ENCODE measurements at regions of chr9 and their contacts with region 1.

Region 1: DNA sequence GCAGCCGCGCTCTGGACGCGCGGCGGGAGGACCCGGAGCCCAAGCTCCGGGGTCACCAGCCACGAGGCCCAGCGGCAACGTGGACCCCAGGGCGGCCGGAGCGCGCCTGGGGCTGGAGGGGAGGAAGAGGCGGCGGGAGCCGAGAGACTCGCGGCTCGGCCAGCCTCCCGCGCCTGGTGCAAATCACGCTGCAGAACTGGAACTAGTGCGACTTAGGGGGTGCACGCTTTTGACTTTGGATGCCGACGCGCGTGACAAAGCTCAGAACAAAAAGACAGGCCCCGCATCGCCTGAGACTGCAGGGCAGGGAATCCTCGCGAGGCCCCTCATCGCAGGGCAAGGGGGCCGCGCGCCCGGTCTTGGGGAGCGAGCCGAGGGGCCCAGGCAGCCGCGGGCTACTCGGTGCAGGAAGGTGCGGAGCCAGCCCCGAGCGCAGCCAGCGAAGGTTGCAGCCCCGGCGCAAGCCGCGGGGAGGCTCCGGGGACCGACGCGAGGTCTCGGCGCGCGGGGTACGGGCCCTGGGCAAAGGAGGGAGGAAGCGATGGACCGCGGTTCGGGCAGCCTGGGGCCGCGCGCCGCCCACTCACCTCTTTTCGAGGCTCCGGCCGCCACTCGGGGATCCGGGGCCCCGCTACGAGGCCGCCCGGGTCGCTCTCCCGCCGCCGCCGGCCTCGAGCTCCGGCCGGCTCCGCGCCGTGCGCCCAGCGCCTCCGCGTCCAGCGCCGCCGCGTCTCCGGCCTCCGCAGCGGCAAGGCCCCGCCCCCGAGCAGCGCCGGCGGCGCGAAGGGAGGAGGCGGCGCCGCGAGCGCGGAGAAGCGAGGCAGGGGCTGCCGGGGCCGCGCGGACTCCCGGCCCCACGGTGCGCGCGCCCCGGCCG is at the start of gene GOLM1:
- H3K4me3 ChIP-seq: peak within 1 kb of the TSS; percentile 74
- H3K27ac ChIP-seq: peak within 1 kb of the TSS; percentile 91
- H3K4me1 ChIP-seq: peaks cover 8% of the 10 kb centered on the region
- CTCF ChIP-seq: peak; percentile 20; the same call in 1 of the 2 replicates

Region 2: DNA sequence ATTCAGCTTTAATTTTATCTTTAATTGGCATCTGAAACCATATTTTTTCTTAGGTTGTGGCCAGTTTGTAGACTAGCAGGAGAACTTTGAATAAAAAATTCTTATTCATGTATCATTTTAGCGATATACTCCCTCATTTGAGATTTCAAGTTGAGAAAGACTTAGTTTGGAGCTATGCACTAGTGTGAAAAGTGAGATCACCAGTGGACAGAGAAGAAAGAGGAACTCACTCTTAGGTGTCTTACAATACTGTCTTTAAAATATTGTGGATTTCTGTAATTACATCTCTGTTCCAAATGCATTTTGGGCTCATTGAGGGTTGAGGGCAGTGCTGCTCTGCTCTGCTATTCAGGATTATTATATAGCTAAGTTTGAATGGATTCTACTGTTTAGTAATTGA is 103.5 kb before region 1 on chr9:
- CTCF ChIA-PET with region 1: no interaction called
- POLR2A ChIA-PET with region 1: no interaction called
- H3K4me3 ChIP-seq: no peak overlapping the region
- H3K27ac ChIP-seq: no peak overlapping the region
- H3K4me1 ChIP-seq: no peaks in the 10 kb centered on the region
- CTCF ChIP-seq: no peak

Region 3: GRCh38 chr9:86126998-86127972 is 28.2 kb after region 1 on chr9:
- CTCF ChIA-PET with region 1: interaction called, 5 read pairs
- POLR2A ChIA-PET with region 1: interaction called, 33 read pairs
- H3K4me3 ChIP-seq: no peak overlapping the region
- H3K27ac ChIP-seq: peak overlapping the region; percentile 67
- H3K4me1 ChIP-seq: peaks cover 15% of the 10 kb centered on the region
- CTCF ChIP-seq: no peak

Region 4: GRCh38 chr9:86176468-86176867 is 77.4 kb after region 1 on chr9:
- CTCF ChIA-PET with region 1: no interaction called
- POLR2A ChIA-PET with region 1: interaction called, 10 read pairs
- H3K4me3 ChIP-seq: no peak overlapping the region
- H3K27ac ChIP-seq: peak overlapping the region; percentile 46; the same call in 1 of the 2 replicates
- H3K4me1 ChIP-seq: peaks cover 9% of the 10 kb centered on the region
- CTCF ChIP-seq: no peak

Measured in HEK293 (cell line).